ENCODE measurements at regions of chr14 and their contacts with region 1.

Region 1: GRCh38 chr14:54440873-54441868 is at the start of gene CNIH1:
- DNase-seq: peak; percentile 85 to 99 (median 93)
- ATAC-seq: peak; percentile 97
- H3K4me3 ChIP-seq: peak within 1 kb of the TSS; percentile 73
- H3K4me3 Mint-ChIP-seq: peak within 1 kb of the TSS; percentile 85 to 97 (median 94)
- H3K27ac ChIP-seq: peak within 1 kb of the TSS; percentile 80
- H3K27ac Mint-ChIP-seq: peak within 1 kb of the TSS; percentile 87 to 98 (median 95)
- H3K4me1 ChIP-seq: peaks cover 9 to 23% of the 10 kb centered on the region in 2 donors
- H3K4me1 Mint-ChIP-seq: peaks cover 23 to 54% (median 49%) of the 10 kb centered on the region in 7 donors
- H3K27me3 ChIP-seq: no peaks in the 10 kb centered on the region
- H3K27me3 Mint-ChIP-seq: peaks cover 0 to 2% (median 0%) of the 10 kb centered on the region in 5 donors
- total RNA-seq, gene CNIH1: 50.5 to 87.9 (median 57.8) TPM

Region 2: DNA sequence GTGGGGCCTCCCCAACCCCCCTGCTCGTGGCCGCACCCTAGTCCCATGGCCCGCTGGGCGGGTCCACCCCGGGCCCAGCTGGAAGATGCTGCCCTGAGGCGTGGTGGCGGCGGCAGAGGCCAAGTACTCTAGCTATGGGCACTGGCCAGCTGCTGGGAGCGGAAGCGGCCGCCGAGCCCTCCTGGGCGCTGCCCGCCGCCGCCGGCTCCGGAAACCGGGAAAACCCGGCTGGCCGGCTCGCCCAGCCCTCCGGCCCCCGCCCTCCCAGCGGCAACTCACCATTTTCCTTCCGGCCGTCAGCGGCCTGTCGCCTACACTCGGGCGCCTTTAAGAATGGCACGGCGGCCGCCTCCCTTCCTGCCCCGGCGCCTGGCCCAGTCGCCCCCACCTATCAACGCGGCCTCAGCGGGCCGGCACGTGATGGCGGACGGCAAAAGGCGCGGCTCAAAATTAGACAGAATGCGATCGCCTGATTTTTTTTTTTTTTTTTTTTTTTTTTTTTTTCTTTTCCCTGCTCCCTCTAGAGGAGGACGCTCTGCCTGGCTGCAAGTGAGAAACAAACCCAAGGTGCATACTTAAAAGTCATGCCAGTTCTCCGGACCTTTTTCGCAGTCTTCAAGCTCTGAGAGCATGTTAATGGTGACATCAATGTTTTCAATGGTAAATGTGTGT is 47.6 kb after region 1 on chr14 and contains the start of gene GMFB:
- CTCF ChIA-PET with region 1: interaction called, 3 read pairs
- POLR2A ChIA-PET with region 1: no interaction called
- intact Hi-C with region 1: loop called (anchors 1 kb)
- DNase-seq: peak; percentile 72 to 88 (median 84)
- ATAC-seq: peak; percentile 97
- H3K4me3 ChIP-seq: peak within 1 kb of the TSS; percentile 65
- H3K4me3 Mint-ChIP-seq: peak within 1 kb of the TSS; percentile 80 to 96 (median 92)
- H3K27ac ChIP-seq: peak within 1 kb of the TSS; percentile 86
- H3K27ac Mint-ChIP-seq: peak within 1 kb of the TSS; percentile 77 to 99 (median 97)
- H3K4me1 ChIP-seq: peaks cover 17 to 18% of the 10 kb centered on the region in 2 donors
- H3K4me1 Mint-ChIP-seq: peaks cover 42 to 69% (median 63%) of the 10 kb centered on the region in 7 donors
- H3K27me3 ChIP-seq: no peaks in the 10 kb centered on the region
- H3K27me3 Mint-ChIP-seq: peaks cover 0 to 3% (median 0%) of the 10 kb centered on the region in 5 donors
- total RNA-seq, gene GMFB: 28.9 to 39.9 (median 34.7) TPM

Region 3: DNA sequence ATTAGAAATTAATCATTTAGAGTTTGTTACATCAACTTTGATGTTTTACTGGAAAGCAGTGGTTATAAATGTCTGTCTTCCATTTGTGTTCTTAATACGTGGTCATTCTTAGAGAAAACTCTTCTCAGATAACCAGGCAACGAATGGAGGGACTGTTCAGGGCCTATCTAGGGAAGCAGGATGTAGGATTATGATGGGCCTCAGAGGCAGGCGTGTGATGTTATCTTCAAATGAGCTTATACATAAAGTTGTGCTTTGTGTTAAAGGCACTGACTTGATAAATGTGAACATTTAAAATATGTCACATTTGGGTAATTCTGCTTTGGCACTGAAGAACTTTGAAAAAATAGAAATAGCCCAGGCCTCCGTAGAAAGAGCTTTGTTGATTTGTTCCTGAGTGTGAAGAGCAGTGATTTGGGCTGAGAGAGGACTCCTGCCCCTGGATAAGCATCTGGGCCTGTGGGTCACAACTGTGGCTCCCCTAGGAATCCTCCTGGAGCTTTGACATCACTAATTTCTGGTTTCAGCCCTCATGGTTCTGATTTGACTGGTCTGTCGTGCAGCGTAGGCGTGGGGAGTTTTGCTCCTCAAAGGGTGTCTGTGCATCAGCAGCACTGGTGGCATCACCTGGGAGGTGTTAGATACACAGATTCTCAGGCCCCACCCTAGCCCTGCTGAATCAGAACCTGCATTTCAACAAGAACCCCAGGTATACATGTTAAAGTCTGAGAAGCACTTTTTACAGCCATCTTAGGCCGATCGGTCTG is 181.2 kb after region 1 on chr14:
- CTCF ChIA-PET with region 1: no interaction called
- POLR2A ChIA-PET with region 1: no interaction called
- intact Hi-C with region 1: no loop called
- DNase-seq: peak in 1 of 9 donors; percentile 51
- ATAC-seq: no peak
- H3K4me3 ChIP-seq: no peak overlapping the region
- H3K4me3 Mint-ChIP-seq: no peak overlapping the region
- H3K27ac ChIP-seq: no peak overlapping the region
- H3K27ac Mint-ChIP-seq: no peak overlapping the region
- H3K4me1 ChIP-seq: peaks cover 6 to 10% of the 10 kb centered on the region in 2 donors
- H3K4me1 Mint-ChIP-seq: peaks cover 7 to 26% (median 10%) of the 10 kb centered on the region in 7 donors
- H3K27me3 ChIP-seq: no peaks in the 10 kb centered on the region
- H3K27me3 Mint-ChIP-seq: no peaks in the 10 kb centered on the region

Region 4: DNA sequence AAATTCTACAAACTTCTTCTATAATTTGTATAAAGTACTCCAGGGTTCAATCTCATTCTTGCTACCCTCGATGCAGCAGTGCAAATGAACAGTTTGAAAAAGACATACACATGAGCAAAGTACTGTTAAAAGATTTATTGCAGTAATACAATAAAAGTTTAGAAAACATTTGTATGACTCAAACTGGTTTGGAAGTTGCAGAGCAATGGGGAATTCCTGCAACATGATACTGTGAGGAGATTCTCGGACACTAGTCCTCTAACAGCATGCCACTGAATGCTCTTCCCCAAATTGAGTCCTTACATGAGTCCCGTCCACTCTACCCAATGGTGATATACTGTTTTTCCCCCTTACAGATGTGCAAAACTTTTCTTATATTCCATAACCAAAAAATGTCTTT is 925.1 kb after region 1 on chr14:
- CTCF ChIA-PET with region 1: no interaction called
- POLR2A ChIA-PET with region 1: no interaction called
- intact Hi-C with region 1: no loop called
- DNase-seq: no peak
- ATAC-seq: no peak
- H3K4me3 ChIP-seq: no peak overlapping the region
- H3K4me3 Mint-ChIP-seq: no peak overlapping the region
- H3K27ac ChIP-seq: no peak overlapping the region
- H3K27ac Mint-ChIP-seq: peak overlapping the region in 1 of 9 donors; percentile 5
- H3K4me1 ChIP-seq: no peaks in the 10 kb centered on the region
- H3K4me1 Mint-ChIP-seq: peaks cover 0 to 11% (median 8%) of the 10 kb centered on the region in 7 donors
- H3K27me3 ChIP-seq: no peaks in the 10 kb centered on the region
- H3K27me3 Mint-ChIP-seq: no peaks in the 10 kb centered on the region